ENCODE measurements at regions of chr5 and their contacts with region 1.

Region 1: DNA sequence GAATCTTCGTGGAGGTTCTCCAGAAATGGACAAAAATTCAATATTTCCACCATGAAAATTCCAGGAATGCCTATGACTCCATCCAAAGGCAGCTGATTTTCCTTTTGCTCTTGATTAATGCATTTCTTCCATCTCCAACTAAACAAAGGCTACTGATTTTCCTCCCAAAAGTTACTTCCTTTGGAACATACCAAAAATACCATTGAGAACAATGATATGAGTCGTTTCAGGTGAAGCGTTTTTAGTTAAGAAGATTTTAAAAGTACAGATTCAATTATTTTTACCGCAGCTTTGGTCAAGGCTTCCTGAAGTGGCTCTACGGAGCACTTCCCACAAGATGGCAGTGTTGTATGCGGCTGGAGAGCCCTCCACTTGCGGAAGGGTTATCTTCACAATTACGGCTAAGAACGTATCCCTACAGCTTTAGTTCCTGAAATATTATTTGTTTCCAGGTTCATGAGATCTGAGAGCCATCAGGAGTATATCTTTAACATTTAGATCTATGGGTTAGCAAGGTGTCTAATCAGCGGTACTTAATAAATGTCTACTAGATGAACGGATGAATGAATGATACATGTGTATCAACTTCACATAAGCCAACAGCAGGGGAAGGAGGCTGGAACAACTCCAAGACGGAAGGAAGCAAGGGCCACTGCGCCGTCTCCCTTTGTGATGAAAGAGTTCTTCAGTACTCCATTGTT is 35.9 kb upstream of the ARSB start:
- DNase-seq: peak; percentile 65 to 81 (median 76)
- H3K4me3 ChIP-seq: peak overlapping the region in 2 of 7 experiments; percentile 5 to 45
- H3K27ac ChIP-seq: no peak overlapping the region
- H3K4me1 ChIP-seq: peaks cover 0 to 7% (median 1%) of the 10 kb centered on the region in 4 experiments
- H3K27me3 ChIP-seq: peaks cover 0 to 10% (median 4%) of the 10 kb centered on the region in 5 experiments

Region 2: DNA sequence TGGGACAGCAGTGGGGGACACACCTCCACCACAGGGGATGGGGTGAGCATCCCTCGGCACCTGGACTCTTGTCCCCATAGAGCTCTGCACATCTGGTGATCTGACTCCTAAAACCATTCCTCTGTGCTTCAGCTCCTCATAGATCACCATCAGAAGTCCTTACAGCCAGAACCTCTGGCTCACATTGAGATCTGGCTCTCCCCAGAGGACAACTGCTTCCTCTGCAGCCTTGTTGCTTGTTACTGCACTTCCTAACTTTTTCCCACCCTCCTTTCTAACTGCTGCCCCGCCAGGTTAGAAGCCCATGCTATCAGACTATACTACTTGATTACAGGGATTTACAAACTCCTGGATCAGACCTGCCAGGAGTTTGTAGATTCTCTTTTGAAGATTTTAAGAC is 100.4 kb before region 1 on chr5:
- CTCF ChIA-PET with region 1: no interaction called
- POLR2A ChIA-PET with region 1: no interaction called
- DNase-seq: no peak
- H3K4me3 ChIP-seq: no peak overlapping the region
- H3K27ac ChIP-seq: no peak overlapping the region
- H3K4me1 ChIP-seq: no peaks in the 10 kb centered on the region
- H3K27me3 ChIP-seq: no peaks in the 10 kb centered on the region

Region 3: DNA sequence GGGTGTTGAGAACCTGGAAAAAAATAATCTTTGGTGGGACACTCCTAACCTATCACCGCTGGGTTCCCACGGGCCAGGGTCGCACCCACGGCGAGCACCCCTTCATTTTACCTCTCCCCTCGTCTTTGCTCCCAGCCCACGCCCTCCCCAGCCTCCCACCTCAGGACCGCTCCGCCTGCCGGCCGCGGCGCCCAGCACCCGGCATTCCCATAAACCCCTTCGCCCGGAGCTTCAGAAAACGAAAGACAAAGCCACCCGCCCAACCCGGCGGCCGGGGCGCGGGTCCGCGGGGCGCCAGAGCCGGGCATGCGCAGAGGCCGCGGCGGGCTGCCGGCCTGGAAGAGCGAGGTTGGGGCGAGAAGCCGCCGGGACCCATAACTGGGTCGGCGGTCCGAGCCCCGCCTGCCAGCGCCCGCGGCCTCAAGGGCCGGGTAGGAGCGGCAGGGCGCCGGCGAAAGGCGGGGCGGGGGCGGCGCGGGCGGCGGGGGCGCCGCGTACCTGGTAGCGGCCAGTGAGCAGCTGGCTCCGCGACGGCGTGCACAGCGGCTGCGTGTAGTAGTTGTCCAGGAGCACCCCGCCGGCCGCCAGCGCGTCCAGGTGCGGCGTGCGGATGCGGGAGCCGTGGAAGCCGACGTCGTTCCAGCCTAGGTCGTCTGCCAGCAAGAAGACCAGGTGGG is 36.4 kb before region 1 on chr5:
- CTCF ChIA-PET with region 1: interaction called, 12 read pairs
- POLR2A ChIA-PET with region 1: no interaction called
- DNase-seq: peak; percentile 81 to 83 (median 81)
- H3K4me3 ChIP-seq: peak overlapping the region; percentile 67 to 94 (median 83)
- H3K27ac ChIP-seq: peak overlapping the region; percentile 61 to 84
- H3K4me1 ChIP-seq: peaks cover 13 to 37% (median 20%) of the 10 kb centered on the region in 4 experiments
- H3K27me3 ChIP-seq: no peaks in the 10 kb centered on the region

Region 4: DNA sequence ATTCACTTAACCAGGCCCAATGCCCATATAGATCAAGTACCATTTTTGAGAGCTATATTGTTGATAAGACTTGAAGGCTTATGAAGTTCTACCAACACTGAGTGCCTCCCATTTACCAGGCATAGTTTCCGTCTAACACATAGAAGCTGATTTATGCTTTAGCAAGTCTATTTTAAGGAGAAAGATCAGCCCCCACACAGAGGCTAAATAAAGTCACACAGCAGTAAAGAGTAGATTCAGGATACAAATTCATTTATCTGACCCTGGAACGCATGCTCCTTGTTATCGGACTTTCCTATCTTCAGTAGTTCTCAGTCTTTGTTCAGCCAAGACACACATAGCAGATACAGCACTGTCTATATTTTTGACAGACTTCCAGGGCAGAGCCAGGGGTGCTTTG is 14.2 kb after region 1 on chr5:
- CTCF ChIA-PET with region 1: interaction called, 14 read pairs
- POLR2A ChIA-PET with region 1: no interaction called
- DNase-seq: no peak
- H3K4me3 ChIP-seq: no peak overlapping the region
- H3K27ac ChIP-seq: no peak overlapping the region
- H3K4me1 ChIP-seq: no peaks in the 10 kb centered on the region
- H3K27me3 ChIP-seq: no peaks in the 10 kb centered on the region

Region 5: DNA sequence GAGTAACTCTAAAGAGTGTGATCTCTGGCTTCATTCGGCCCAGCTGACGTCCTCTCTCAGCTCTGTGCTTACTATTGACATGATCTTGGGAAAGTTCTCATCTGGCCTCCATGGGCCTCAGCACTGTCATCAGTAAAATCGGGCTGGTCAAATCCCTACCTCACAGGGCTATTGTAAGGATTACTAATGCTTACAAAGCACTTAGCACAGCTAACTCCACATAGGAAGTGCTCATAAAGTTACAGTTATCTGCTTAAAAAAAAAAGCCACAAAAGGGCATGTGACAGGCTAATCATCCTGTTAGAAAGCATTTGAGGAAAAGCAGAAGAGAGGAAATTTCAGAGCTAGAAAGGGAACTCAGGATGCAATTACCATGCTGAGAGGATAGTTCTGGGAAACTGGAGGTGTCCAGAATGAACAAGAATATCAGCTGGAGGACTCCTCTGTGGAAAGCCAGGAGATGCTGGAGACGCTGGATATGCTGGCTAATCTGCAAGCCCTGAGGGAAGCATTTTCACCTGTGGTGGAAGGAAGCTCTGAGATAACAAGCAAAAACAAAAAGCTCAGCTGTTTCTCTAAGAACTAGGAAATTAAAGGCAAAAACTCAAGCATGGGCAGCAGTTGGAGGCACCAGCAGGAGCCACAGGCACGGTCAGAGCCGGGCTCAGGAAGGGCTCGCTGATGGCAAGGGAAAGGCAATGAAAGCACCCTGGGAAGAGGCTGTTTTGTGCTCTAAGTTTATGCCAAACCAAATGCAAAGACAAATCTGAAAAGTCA is 86.2 kb after region 1 on chr5:
- CTCF ChIA-PET with region 1: interaction called, 10 read pairs
- POLR2A ChIA-PET with region 1: no interaction called
- DNase-seq: peak; percentile 39 to 78 (median 64)
- H3K4me3 ChIP-seq: peak overlapping the region in 3 of 7 experiments; percentile 6 to 29 (median 9)
- H3K27ac ChIP-seq: no peak overlapping the region
- H3K4me1 ChIP-seq: peaks cover 5 to 32% (median 26%) of the 10 kb centered on the region in 4 experiments
- H3K27me3 ChIP-seq: peaks cover 6 to 23% (median 10%) of the 10 kb centered on the region in 5 experiments

Region 6: DNA sequence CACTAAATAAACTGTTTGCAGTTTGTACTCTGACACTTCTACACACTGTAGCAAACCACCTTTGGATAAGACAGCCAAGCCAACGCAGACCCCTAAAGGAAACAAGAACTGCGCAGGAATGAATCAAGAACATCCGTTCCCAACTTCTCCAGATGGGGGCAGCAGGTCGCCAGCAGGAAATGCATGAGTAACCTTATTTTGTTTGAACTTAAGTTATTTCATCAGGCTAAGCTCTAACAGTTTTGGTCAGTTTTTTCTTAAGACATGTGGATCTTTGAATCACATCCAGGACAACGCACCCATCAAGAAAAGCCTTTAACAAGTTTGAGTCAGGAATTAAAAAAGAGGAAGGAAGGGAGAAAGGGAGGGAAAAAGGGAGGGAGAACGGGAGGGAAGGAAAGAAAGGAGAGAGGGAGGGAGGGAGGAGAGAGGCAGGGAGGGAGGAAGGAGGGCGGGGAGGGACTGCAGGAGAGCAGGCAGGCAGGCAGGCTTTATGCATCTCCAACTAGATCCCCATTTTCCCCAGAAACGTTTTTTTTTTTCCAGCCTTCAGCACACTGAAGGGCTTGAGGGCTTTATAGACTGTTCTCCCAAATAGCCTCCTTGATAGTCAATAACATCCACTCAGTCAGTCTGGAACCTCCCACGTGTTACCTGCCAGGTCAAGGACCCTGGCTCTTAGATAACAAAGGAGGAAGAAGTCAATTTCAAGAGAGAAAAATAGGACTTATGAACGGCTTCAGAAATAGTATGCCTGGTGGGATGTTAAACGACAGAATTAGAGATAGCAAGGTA is 112.8 kb after region 1 on chr5:
- CTCF ChIA-PET with region 1: interaction called, 277 read pairs
- POLR2A ChIA-PET with region 1: no interaction called
- DNase-seq: peak; percentile 83 to 90 (median 88)
- H3K4me3 ChIP-seq: peak overlapping the region in 6 of 7 experiments; percentile 21 to 67 (median 41)
- H3K27ac ChIP-seq: peak overlapping the region in 1 of 2 experiments; percentile 49
- H3K4me1 ChIP-seq: peaks cover 6 to 12% (median 12%) of the 10 kb centered on the region in 4 experiments
- H3K27me3 ChIP-seq: no peaks in the 10 kb centered on the region

Region 7: DNA sequence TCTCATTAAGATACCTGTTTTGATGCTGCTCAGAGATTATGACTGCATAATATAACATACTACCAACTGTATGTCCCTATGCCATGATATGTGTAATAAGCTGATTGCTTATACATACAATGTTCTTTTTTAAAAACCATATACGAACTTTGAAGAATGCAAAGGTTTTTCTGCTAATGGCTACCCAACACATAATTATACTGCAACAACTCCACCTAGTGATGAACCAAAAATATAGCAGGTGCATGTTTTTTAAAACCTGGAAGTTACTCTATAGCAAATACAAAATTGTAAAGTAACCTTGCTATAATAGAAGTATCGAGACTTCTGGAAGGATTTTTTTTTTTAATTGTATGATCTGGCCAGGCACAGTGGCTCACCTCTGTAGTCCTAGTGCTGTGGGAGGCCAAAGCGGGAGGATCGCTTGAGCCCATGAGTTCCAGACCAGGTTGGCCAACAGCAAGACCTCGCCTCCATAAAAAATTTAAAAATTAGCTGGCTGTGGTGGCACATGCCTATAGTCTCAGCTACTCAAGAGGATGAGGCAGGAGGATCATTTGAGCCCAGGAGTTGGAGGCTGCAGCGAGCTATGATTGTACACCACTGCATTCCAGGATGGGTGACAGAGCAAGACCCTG is 443.8 kb after region 1 on chr5:
- CTCF ChIA-PET with region 1: interaction called, 82 read pairs
- POLR2A ChIA-PET with region 1: no interaction called
- DNase-seq: peak; percentile 22 to 51 (median 41)
- H3K4me3 ChIP-seq: no peak overlapping the region
- H3K27ac ChIP-seq: no peak overlapping the region
- H3K4me1 ChIP-seq: no peaks in the 10 kb centered on the region
- H3K27me3 ChIP-seq: no peaks in the 10 kb centered on the region